ENCODE measurements at regions of chr16 and their contacts with region 1.

Region 1: DNA sequence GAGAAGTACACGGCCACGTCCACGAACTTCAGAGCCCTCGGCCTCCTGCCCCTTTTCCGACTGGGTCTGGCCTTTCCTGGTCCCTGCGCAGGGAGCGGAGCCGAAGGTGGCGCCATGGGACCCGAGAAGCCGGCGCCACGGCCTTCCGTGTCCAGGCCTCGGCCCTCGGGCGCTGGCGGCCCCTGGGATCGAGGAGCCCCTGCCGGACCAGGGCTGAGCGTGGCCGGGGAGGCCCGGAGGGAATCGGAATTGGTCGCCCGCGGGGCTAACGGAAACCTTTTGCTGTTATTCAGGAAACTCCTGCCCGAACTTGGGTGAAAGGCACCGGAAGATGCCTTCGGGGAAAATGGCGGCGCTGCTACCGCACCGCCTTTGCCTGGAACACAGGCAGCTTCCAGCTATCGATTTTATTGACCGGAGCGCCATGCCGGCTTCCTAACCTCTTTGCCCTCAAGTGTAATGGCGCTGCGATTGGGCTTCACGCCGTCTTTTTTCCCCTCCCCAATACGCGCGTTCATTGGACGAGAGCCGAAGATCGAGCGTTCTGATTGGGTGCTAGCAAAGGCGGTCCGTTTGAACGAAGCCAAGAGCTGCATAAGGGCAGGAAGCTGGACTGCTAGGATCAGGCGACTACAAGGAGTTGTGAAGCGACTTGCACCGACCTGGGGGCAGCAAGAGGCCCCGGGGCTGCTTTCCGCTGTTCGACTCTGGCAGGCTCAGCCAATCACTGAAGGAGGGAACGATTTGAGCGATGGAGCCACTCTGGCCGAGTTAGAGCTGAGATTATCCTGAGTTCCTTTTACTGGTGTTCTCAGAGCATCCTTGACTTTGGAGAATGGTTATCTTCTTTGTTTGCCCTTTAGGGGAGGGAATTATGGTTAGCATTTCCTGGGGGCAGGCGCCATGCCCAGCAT is at the start of gene ZNF689:
- DNase-seq: peak; percentile 90
- ATAC-seq: peak; percentile 87
- H3K4me3 Mint-ChIP-seq: peak within 1 kb of the TSS; percentile 93
- H3K27ac Mint-ChIP-seq: peak within 1 kb of the TSS; percentile 95
- H3K4me1 Mint-ChIP-seq: peaks cover 19% of the 10 kb centered on the region
- H3K27me3 Mint-ChIP-seq: no peaks in the 10 kb centered on the region
- CTCF ChIP-seq: no peak
- total RNA-seq, gene ZNF689: 10.1 and 11.6 TPM in 2 replicates

Region 2: DNA sequence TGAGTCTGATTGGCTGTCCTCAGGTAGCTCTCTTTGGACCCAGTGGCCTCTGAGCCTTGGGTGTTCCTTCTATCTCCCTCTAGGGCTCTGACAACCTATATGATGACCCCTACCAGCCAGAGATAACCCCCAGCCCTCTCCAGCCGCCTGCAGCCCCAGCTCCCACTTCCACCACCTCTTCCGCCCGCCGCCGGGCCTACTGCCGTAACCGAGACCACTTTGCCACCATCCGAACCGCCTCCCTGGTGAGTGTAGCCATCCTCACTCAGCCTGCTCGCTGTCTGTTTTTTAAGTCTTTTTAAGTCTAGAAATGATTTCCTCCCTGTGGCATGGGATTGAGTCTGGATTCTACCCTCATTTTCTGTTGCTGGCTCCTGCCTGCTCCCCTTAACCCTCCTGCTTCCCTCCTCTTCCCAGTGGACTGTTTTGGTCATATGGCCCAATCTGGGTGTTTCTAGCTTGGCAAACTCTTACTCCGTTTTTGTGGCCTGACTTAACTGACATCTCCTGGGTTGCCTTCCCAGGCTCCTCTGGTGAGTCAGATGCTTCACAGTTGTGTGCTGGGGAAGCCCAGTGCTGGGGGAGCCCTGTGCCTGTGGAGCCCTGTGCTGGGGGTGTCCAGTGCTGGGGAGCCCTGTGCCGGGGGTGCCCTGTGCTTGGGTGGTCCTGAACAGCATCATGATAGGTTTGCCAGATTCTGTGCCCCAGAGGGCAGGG is 626.6 kb before region 1 on chr16:
- CTCF ChIA-PET with region 1: no interaction called
- POLR2A ChIA-PET with region 1: no interaction called
- intact Hi-C with region 1: no loop called
- DNase-seq: no peak
- ATAC-seq: no peak
- H3K4me3 Mint-ChIP-seq: no peak overlapping the region
- H3K27ac Mint-ChIP-seq: no peak overlapping the region
- H3K4me1 Mint-ChIP-seq: no peaks in the 10 kb centered on the region
- H3K27me3 Mint-ChIP-seq: no peaks in the 10 kb centered on the region
- CTCF ChIP-seq: no peak

Region 3: DNA sequence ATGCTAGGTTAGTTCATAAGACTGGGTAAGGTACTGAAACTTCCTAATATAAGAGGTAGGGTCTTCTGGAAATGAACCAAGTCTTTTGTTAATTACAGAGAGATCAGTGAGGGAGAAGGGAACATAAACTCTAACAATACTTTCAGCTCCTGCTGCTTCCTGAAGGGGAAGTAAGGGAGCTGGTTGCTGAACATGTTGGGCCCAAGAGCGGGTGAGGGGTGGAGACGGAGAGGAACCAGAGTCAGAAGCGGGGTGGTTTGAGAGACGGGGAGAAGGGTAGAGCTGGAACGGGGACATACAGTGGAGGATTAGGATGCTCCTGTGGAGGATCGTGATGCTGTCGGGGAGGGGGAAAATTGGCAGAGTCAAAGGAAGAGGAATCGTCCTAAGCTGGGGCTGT is 64.1 kb before region 1 on chr16:
- CTCF ChIA-PET with region 1: no interaction called
- POLR2A ChIA-PET with region 1: no interaction called
- intact Hi-C with region 1: no loop called
- DNase-seq: no peak
- ATAC-seq: no peak
- H3K4me3 Mint-ChIP-seq: no peak overlapping the region
- H3K27ac Mint-ChIP-seq: no peak overlapping the region
- H3K4me1 Mint-ChIP-seq: no peaks in the 10 kb centered on the region
- H3K27me3 Mint-ChIP-seq: no peaks in the 10 kb centered on the region
- CTCF ChIP-seq: no peak

Region 4: DNA sequence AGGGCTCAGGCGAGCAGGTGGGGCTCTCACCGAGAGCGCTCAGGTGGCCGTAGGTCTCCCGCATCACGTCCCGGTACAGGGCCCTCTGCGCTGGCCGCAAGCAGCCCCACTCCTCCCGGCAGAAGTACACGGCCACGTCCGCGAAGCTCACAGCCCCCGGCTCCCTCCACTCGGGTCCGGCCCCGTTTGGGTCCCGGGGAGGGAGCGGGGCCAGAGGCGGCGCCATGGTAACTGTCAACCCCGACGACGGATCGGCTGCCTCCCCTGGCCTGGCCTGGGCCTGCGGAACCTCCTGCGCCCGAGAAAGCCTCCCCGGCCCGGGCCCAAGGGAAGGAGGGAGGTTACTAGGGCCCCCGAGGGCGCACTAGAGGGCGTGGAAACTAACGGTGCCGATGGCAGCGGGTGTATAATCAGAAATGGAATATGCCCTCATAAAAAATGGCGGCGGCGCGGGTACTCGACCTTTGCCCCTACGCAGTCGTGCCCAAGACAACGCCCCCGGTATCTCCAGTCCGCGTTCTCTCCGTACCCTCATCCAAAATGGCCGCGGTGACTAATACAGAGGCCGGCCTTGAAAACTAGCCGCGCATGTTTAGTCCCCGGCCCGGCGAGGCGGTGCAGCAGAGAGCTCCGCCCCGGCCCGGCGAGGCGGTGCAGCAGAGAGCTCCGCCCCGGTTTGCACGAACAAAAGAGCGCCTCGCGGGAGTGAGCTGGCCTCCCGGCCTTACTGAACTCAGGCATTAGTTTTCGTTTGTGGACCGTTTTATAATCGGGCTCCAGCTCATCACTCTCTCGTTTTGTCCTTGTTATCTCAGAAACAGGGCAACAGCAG is 52.0 kb before region 1 on chr16 and contains the start of gene ZNF764:
- CTCF ChIA-PET with region 1: no interaction called
- POLR2A ChIA-PET with region 1: interaction called, 15 read pairs
- intact Hi-C with region 1: no loop called
- DNase-seq: peak; percentile 91
- ATAC-seq: peak; percentile 93
- H3K4me3 Mint-ChIP-seq: peak within 1 kb of the TSS; percentile 83
- H3K27ac Mint-ChIP-seq: peak within 1 kb of the TSS; percentile 84
- H3K4me1 Mint-ChIP-seq: peaks cover 43% of the 10 kb centered on the region
- H3K27me3 Mint-ChIP-seq: no peaks in the 10 kb centered on the region
- CTCF ChIP-seq: no peak
- total RNA-seq, gene ZNF764: 16.1 and 19.2 TPM in 2 replicates

Region 5: GRCh38 chr16:30585400-30586189 is 24.6 kb before region 1 on chr16 and contains the start of gene ZNF785:
- CTCF ChIA-PET with region 1: no interaction called
- POLR2A ChIA-PET with region 1: interaction called, 12 read pairs
- intact Hi-C with region 1: loop called (anchors 1 kb)
- DNase-seq: peak; percentile 76
- ATAC-seq: peak; percentile 99
- H3K4me3 Mint-ChIP-seq: peak within 1 kb of the TSS; percentile 85
- H3K27ac Mint-ChIP-seq: peak within 1 kb of the TSS; percentile 79
- H3K4me1 Mint-ChIP-seq: peaks cover 19% of the 10 kb centered on the region
- H3K27me3 Mint-ChIP-seq: no peaks in the 10 kb centered on the region
- CTCF ChIP-seq: no peak
- total RNA-seq, gene ZNF785: 20.0 and 22.8 TPM in 2 replicates

Region 6: DNA sequence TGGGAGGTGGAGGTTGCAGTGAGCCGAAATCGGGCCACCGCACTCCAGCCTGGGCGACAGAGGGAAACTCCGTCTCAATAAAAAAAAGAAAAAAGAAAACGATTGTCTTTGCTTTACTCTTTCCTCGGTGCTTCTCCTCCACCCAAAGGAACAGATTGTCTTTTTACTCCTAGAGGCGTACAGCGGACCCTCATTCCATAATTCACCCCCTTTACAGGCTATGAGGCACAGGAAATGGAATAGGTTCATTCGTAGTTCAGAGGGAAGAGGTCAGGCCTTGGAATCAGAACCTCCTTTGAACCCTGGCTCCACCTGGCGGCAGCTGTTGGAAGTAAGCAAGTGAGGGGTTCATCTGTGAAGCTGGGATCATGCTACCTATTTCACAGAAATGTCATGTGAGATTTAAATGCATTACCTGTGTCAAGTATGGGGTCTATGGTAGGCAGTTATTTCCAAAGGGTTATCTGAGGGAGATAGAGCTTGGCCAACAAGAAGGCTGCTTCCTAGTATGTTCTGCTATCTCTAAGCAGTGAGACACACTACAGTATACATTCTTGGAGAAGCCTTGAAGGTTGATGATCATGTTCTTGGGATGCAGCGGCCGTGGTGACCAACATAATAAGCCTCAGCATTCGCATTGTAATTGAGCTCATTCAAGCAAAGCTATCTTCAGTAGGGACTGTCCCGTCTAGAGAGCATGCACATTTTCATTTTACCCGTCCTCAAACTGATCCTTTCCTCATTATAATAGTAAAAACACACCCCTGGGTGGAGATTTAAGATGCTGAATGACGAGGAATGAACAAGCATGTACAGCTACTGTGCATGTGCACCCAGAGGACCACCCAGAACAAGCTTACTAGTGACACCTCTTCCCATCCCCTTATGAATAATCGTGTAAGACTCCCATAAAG is 18.7 kb after region 1 on chr16:
- CTCF ChIA-PET with region 1: interaction called, 12 read pairs
- POLR2A ChIA-PET with region 1: interaction called, 10 read pairs
- intact Hi-C with region 1: loop called (anchors 1 kb)
- DNase-seq: peak; percentile 84
- ATAC-seq: peak; percentile 93
- H3K4me3 Mint-ChIP-seq: peak overlapping the region; percentile 69
- H3K27ac Mint-ChIP-seq: peak overlapping the region; percentile 76
- H3K4me1 Mint-ChIP-seq: peaks cover 6% of the 10 kb centered on the region
- H3K27me3 Mint-ChIP-seq: no peaks in the 10 kb centered on the region
- CTCF ChIP-seq: peak; percentile 70

Region 7: DNA sequence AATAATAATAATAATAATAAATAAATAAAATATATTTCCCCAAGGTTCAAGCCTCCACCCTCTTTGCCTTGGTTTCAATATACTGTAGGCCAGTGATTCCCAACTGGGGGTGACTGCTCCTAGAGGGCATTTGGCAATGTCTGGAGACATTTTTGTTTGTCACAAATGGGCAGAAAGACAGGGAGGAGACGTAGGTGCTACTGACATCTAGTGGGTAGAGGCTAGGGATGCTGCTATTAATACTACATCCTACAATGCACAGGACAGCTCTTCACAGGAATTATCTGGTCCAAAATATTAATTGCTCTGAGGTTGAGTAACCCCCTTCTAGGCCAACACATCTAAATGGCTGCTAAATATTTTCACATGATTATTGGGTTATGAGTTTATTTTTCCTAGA is 27.8 kb after region 1 on chr16:
- CTCF ChIA-PET with region 1: no interaction called
- POLR2A ChIA-PET with region 1: interaction called, 10 read pairs
- intact Hi-C with region 1: loop called (anchors 1 kb)
- DNase-seq: no peak
- ATAC-seq: no peak
- H3K4me3 Mint-ChIP-seq: no peak overlapping the region
- H3K27ac Mint-ChIP-seq: no peak overlapping the region
- H3K4me1 Mint-ChIP-seq: peaks cover 21% of the 10 kb centered on the region
- H3K27me3 Mint-ChIP-seq: no peaks in the 10 kb centered on the region
- CTCF ChIP-seq: no peak